ENCODE measurements at regions of chrX and their contacts with region 1.

Region 1: GRCh38 chrX:123833387-123833786 is 26.5 kb upstream of the XIAP start:
- DNase-seq: peak; percentile 87
- H3K4me3 Mint-ChIP-seq: no peak overlapping the region
- H3K27ac Mint-ChIP-seq: no peak overlapping the region
- H3K4me1 Mint-ChIP-seq: peaks cover 9% of the 10 kb centered on the region
- H3K27me3 Mint-ChIP-seq: peaks cover 5% of the 10 kb centered on the region

Region 2: GRCh38 chrX:123550829-123551228 is 282.6 kb before region 1 on chrX:
- intact Hi-C with region 1: no loop called
- DNase-seq: no peak
- H3K4me3 Mint-ChIP-seq: no peak overlapping the region
- H3K27ac Mint-ChIP-seq: no peak overlapping the region
- H3K4me1 Mint-ChIP-seq: no peaks in the 10 kb centered on the region
- H3K27me3 Mint-ChIP-seq: peaks cover 2% of the 10 kb centered on the region

Region 3: GRCh38 chrX:123685232-123685631 is 148.2 kb before region 1 on chrX:
- intact Hi-C with region 1: no loop called
- DNase-seq: no peak
- H3K4me3 Mint-ChIP-seq: no peak overlapping the region
- H3K27ac Mint-ChIP-seq: no peak overlapping the region
- H3K4me1 Mint-ChIP-seq: peaks cover 3% of the 10 kb centered on the region
- H3K27me3 Mint-ChIP-seq: no peaks in the 10 kb centered on the region

Region 4: DNA sequence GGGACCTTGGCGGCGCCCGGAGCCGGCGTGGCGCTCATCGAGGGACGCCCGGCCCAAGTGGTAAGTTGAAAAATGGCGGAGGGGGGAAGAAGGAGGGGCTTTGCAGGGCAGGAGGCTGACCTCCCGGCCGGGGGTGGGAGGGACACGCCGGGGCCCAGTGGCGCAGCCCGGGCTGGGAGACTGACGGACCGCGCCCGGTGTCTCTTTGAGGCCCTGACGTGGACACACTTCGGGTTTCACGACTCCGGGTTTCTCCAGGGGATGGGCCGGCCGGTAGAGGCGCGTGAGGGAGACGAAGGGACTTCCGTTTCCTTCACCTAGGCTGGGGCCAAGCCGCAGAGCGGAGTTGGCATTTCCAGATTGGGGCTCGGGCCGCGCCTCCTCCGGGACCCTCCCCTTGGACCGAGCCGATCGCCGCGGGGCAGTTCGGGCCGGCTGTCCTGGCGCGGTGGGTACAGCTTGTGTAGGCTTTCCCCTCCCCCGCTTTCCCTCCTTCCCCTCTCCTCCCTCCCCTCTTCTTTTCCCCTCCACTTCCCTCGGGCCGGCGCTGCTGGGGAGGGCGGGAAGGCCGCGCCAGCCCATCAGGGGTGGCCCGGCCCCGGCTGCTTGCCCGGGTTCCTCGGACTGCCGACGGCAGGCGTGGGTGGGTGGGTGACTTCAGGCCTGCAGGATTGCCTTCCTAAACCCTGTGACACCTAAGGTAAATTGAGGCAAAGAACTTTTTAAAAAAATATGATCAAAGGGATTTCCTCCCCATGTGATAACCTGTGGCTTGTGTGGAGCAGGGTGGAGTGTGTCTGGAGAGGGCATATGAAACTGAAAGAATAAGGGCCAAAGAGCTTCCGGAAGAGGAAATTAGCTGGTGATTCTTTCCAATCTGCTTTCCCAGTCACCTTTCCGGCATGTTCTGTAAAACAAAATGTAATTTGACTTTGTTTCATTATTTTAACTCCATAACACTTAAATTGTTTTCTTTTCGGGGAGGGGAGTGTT is 26.8 kb after region 1 on chrX and contains the start of gene XIAP:
- intact Hi-C with region 1: loop called (anchors 1 kb)
- DNase-seq: peak; percentile 90
- H3K4me3 Mint-ChIP-seq: peak within 1 kb of the TSS; percentile 84
- H3K27ac Mint-ChIP-seq: peak within 1 kb of the TSS; percentile 92
- H3K4me1 Mint-ChIP-seq: peaks cover 5% of the 10 kb centered on the region
- H3K27me3 Mint-ChIP-seq: no peaks in the 10 kb centered on the region
- total RNA-seq, gene XIAP: 34.7 and 36.3 TPM in 2 replicates

Region 5: GRCh38 chrX:123884809-123885408 is 51.5 kb after region 1 on chrX:
- intact Hi-C with region 1: loop called (anchors 2 kb)
- DNase-seq: peak; percentile 75
- H3K4me3 Mint-ChIP-seq: no peak overlapping the region
- H3K27ac Mint-ChIP-seq: no peak overlapping the region
- H3K4me1 Mint-ChIP-seq: peaks cover 6% of the 10 kb centered on the region
- H3K27me3 Mint-ChIP-seq: no peaks in the 10 kb centered on the region

Measured in activated CD4-positive, alpha-beta T cell treated with anti-CD3 and anti-CD28 coated beads, Interleukin-2, amount 10 ng/mL, durations not matched to agents 24 days and 14 days (primary cell).